CD4-positive, alpha-beta T cell (primary cell): ENCODE measurements at regions of chr9 and their contacts with region 1.

Region 1: GRCh38 chr9:34646211-34647083 is at the start of gene GALT:
- DNase-seq: peak; percentile 90 to 98 (median 96)
- ATAC-seq: peak; percentile 88
- H3K4me3 ChIP-seq: peak within 1 kb of the TSS; percentile 99
- H3K4me3 Mint-ChIP-seq: peak within 1 kb of the TSS; percentile 97
- H3K27ac ChIP-seq: peak within 1 kb of the TSS; percentile 68 to 85
- H3K27ac Mint-ChIP-seq: peak within 1 kb of the TSS; percentile 88
- H3K4me1 ChIP-seq: peaks cover 38% of the 10 kb centered on the region
- H3K4me1 Mint-ChIP-seq: peaks cover 34% of the 10 kb centered on the region
- H3K27me3 ChIP-seq: no peaks in the 10 kb centered on the region
- H3K27me3 Mint-ChIP-seq: no peaks in the 10 kb centered on the region
- CTCF ChIP-seq: peak; percentile 54
- total RNA-seq, gene GALT: 115 TPM

Region 2: GRCh38 chr9:34611829-34612630 is 34.4 kb before region 1 on chr9 and contains the start of gene RPP25L:
- CTCF ChIA-PET with region 1: interaction called, 4 read pairs
- POLR2A ChIA-PET with region 1: interaction called, 6 read pairs
- intact Hi-C with region 1: loop called in 1 of 2 experiments (anchors 5 kb)
- DNase-seq: peak; percentile 64 to 94 (median 82)
- ATAC-seq: peak; percentile 91
- H3K4me3 ChIP-seq: peak within 1 kb of the TSS; percentile 95
- H3K4me3 Mint-ChIP-seq: peak within 1 kb of the TSS; percentile 84
- H3K27ac ChIP-seq: peak within 1 kb of the TSS; percentile 79 to 83
- H3K27ac Mint-ChIP-seq: peak within 1 kb of the TSS; percentile 40
- H3K4me1 ChIP-seq: peaks cover 28% of the 10 kb centered on the region
- H3K4me1 Mint-ChIP-seq: peaks cover 24% of the 10 kb centered on the region
- H3K27me3 ChIP-seq: no peaks in the 10 kb centered on the region
- H3K27me3 Mint-ChIP-seq: no peaks in the 10 kb centered on the region
- CTCF ChIP-seq: no peak
- total RNA-seq, gene RPP25L: 4.6 to 5.7 TPM

Region 3: GRCh38 chr9:34620061-34620994 is 26.1 kb before region 1 on chr9 and contains the start of gene DCTN3:
- CTCF ChIA-PET with region 1: no interaction called
- POLR2A ChIA-PET with region 1: interaction called, 20 read pairs
- intact Hi-C with region 1: no loop called
- DNase-seq: peak; percentile 78 to 97 (median 88)
- ATAC-seq: peak; percentile 97
- H3K4me3 ChIP-seq: peak within 1 kb of the TSS; percentile 86
- H3K4me3 Mint-ChIP-seq: peak within 1 kb of the TSS; percentile 96
- H3K27ac ChIP-seq: peak within 1 kb of the TSS; percentile 33
- H3K27ac Mint-ChIP-seq: peak within 1 kb of the TSS; percentile 61
- H3K4me1 ChIP-seq: peaks cover 36% of the 10 kb centered on the region
- H3K4me1 Mint-ChIP-seq: peaks cover 33% of the 10 kb centered on the region
- H3K27me3 ChIP-seq: peaks cover 36 to 37% of the 10 kb centered on the region in 2 experiments
- H3K27me3 Mint-ChIP-seq: peaks cover 49% of the 10 kb centered on the region
- CTCF ChIP-seq: no peak
- total RNA-seq, gene DCTN3: 81.5 to 84.4 TPM

Region 4: GRCh38 chr9:34659592-34660535 is 13.4 kb after region 1 on chr9:
- CTCF ChIA-PET with region 1: interaction called, 57 read pairs
- POLR2A ChIA-PET with region 1: interaction called, 38 read pairs
- intact Hi-C with region 1: loop called (anchors 1 kb)
- DNase-seq: no peak
- ATAC-seq: no peak
- H3K4me3 ChIP-seq: no peak overlapping the region
- H3K4me3 Mint-ChIP-seq: no peak overlapping the region
- H3K27ac ChIP-seq: no peak overlapping the region
- H3K27ac Mint-ChIP-seq: no peak overlapping the region
- H3K4me1 ChIP-seq: peaks cover 60% of the 10 kb centered on the region
- H3K4me1 Mint-ChIP-seq: peaks cover 42% of the 10 kb centered on the region
- H3K27me3 ChIP-seq: no peaks in the 10 kb centered on the region
- H3K27me3 Mint-ChIP-seq: no peaks in the 10 kb centered on the region
- CTCF ChIP-seq: no peak

Region 5: DNA sequence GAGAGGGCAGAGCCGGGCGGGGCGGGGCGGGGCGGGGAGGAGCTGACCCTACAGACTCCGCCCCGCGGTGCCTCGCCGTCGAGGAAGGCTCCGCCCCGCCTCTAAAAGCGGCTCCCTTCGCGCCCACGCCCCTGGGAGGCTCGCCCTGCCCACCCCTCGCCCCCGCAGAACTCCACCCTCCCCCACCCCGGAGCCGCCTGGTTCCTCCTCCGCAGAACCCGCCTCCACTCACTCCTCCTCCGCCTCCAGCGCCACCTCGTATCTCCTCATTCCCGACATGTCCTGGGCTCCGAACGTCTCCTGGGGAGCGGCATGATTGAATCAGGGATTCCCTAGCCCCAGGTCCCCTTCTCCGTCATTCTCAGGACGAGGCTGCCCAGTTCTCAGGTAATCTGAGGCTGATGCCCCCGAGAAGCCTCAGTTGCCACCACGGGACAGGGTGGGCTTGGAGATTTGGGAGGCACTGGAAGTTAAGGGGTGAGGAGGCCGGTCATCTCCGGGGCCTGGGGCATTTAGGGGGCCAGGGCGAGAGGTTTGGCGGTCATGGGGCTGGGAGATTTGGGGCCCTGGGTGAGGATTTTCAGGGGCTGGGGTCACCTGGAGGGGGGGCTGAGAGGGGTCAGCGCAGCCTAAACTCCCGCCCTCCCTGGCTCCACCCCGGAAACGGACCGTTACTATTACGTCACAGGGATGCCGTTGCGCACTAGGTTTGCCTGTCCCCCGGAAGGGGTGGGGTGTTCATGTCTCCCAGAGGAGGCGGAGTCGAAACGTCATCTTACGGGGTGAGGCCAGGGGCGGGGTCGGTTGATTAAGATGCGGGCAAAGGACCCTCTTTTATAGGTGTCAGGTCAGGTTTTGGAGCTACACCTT is 19.2 kb after region 1 on chr9:
- CTCF ChIA-PET with region 1: interaction called, 57 read pairs
- POLR2A ChIA-PET with region 1: interaction called, 38 read pairs
- intact Hi-C with region 1: loop called (anchors 1 kb)
- DNase-seq: peak; percentile 81 to 97 (median 88)
- ATAC-seq: peak; percentile 79
- H3K4me3 ChIP-seq: peak overlapping the region; percentile 90
- H3K4me3 Mint-ChIP-seq: peak overlapping the region; percentile 97
- H3K27ac ChIP-seq: peak overlapping the region; percentile 95 to 99
- H3K27ac Mint-ChIP-seq: peak overlapping the region; percentile 99
- H3K4me1 ChIP-seq: peaks cover 55% of the 10 kb centered on the region
- H3K4me1 Mint-ChIP-seq: peaks cover 52% of the 10 kb centered on the region
- H3K27me3 ChIP-seq: no peaks in the 10 kb centered on the region
- H3K27me3 Mint-ChIP-seq: no peaks in the 10 kb centered on the region
- CTCF ChIP-seq: no peak

Region 6: GRCh38 chr9:34701769-34702736 is 55.6 kb after region 1 on chr9:
- CTCF ChIA-PET with region 1: interaction called, 37 read pairs
- POLR2A ChIA-PET with region 1: interaction called, 6 read pairs
- intact Hi-C with region 1: loop called (anchors 1 kb)
- DNase-seq: peak; percentile 70 to 88 (median 78)
- ATAC-seq: peak; percentile 82
- H3K4me3 ChIP-seq: peak overlapping the region; percentile 54
- H3K4me3 Mint-ChIP-seq: peak overlapping the region; percentile 87
- H3K27ac ChIP-seq: no peak overlapping the region
- H3K27ac Mint-ChIP-seq: no peak overlapping the region
- H3K4me1 ChIP-seq: peaks cover 12% of the 10 kb centered on the region
- H3K4me1 Mint-ChIP-seq: peaks cover 14% of the 10 kb centered on the region
- H3K27me3 ChIP-seq: no peaks in the 10 kb centered on the region
- H3K27me3 Mint-ChIP-seq: peaks cover 8% of the 10 kb centered on the region
- CTCF ChIP-seq: peak; percentile 85